ENCODE measurements at regions of chr4 and their contacts with region 1.

Region 1: GRCh38 chr4:76896731-76897535 is 1.0 kb downstream of the SOWAHB start:
- DNase-seq: peak in 1 of 2 experiments; percentile 66
- H3K4me3 ChIP-seq: peak overlapping the region; percentile 92
- H3K4me3 Mint-ChIP-seq: peak overlapping the region; percentile 72
- H3K27ac Mint-ChIP-seq: no peak overlapping the region
- H3K4me1 ChIP-seq: peaks cover 23% of the 10 kb centered on the region
- H3K4me1 Mint-ChIP-seq: peaks cover 14% of the 10 kb centered on the region
- H3K27me3 ChIP-seq: no peaks in the 10 kb centered on the region
- H3K27me3 Mint-ChIP-seq: no peaks in the 10 kb centered on the region
- CTCF ChIP-seq: no peak

Region 2: GRCh38 chr4:76765473-76766183 is 131.3 kb before region 1 on chr4:
- CTCF ChIA-PET with region 1: no interaction called
- POLR2A ChIA-PET with region 1: interaction called, 4 read pairs
- intact Hi-C with region 1: loop called (anchors 5 kb)
- DNase-seq: no peak
- H3K4me3 ChIP-seq: no peak overlapping the region
- H3K4me3 Mint-ChIP-seq: no peak overlapping the region
- H3K27ac Mint-ChIP-seq: no peak overlapping the region
- H3K4me1 ChIP-seq: peaks cover 42% of the 10 kb centered on the region
- H3K4me1 Mint-ChIP-seq: peaks cover 31% of the 10 kb centered on the region
- H3K27me3 ChIP-seq: no peaks in the 10 kb centered on the region
- H3K27me3 Mint-ChIP-seq: no peaks in the 10 kb centered on the region
- CTCF ChIP-seq: no peak

Region 3: DNA sequence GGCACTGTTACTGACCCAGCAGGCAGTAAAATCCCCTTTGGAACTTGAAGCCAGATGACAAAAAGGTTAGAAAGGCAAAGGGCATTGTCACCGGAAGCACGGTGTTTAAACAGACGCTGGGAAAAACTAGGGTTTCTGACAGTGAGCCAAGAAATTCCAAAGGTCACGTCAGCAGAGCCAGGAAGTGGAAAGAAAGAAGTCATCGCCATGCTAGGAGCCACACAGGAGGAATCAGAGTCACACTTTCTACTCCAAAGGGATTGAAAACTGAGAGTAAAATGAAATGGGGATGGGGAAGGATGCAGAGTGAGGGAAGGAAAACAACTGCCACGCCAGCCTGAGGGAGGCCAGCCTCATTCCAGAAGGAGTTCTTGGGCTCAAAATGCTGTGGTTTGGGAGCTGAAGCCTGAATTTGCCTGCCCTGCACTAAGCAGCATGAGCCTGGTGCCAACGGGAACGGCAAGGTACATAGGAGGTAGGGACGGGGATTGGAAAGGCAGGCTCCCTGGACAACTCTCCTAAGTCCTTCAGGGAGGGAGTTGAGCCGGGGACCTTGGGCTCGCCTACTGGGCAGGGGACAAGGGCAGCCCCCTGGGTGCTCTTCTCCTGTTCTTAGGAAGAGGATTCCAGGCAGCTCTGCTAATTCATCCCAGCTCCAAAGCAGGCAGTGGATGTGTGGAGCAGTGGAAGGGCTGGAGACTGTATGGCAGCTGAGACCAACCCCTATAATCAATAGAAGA is 65.8 kb before region 1 on chr4:
- CTCF ChIA-PET with region 1: no interaction called
- POLR2A ChIA-PET with region 1: interaction called, 4 read pairs
- intact Hi-C with region 1: loop called (anchors 10 kb)
- DNase-seq: peak; percentile 64 to 78
- H3K4me3 ChIP-seq: peak overlapping the region; percentile 41
- H3K4me3 Mint-ChIP-seq: peak overlapping the region; percentile 71
- H3K27ac Mint-ChIP-seq: peak overlapping the region; percentile 92
- H3K4me1 ChIP-seq: peaks cover 24% of the 10 kb centered on the region
- H3K4me1 Mint-ChIP-seq: peaks cover 27% of the 10 kb centered on the region
- H3K27me3 ChIP-seq: no peaks in the 10 kb centered on the region
- H3K27me3 Mint-ChIP-seq: no peaks in the 10 kb centered on the region
- CTCF ChIP-seq: no peak

Region 4: DNA sequence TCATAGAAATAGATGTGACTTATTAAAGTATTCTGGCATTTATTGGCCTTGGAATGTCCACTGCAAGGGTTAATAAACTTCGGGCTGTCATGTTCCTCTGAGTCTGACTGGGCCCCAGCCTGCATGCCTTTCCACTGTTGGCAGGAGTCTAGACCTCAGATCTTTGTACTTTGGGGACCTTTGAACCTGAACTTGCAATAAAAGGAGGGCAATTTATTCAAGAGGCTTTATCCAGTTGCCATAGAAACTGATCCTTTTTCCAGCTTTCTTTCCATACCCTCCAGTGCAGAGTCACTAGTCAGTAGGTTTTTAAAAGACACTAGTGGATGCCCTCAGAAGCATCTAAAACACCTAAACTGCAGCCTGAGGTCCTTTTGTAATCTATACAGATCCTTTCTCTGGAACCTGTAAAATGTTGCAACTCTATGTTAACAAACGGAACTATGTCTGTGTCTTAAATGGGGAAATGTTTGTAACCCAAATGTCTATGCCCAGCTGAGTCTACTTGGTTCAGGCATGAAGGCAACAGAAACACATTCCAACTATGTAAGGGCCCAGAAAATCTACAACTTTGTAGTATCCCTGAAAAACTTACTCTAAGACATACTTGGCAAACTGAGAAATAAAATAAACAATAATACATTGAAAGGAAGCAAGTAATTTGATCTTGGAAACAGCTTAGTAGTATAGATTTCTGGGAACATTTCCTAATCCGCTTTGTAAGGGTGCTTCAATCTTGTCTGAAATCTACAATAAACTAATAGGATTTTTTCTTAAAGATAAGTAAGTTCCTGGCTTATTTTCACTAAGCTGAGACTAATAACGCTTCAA is 40.5 kb before region 1 on chr4:
- CTCF ChIA-PET with region 1: no interaction called
- POLR2A ChIA-PET with region 1: interaction called, 5 read pairs
- intact Hi-C with region 1: loop called (anchors 1 kb)
- DNase-seq: peak; percentile 77 to 79
- H3K4me3 ChIP-seq: no peak overlapping the region
- H3K4me3 Mint-ChIP-seq: peak overlapping the region; percentile 24
- H3K27ac Mint-ChIP-seq: peak overlapping the region; percentile 25
- H3K4me1 ChIP-seq: peaks cover 21% of the 10 kb centered on the region
- H3K4me1 Mint-ChIP-seq: peaks cover 30% of the 10 kb centered on the region
- H3K27me3 ChIP-seq: no peaks in the 10 kb centered on the region
- H3K27me3 Mint-ChIP-seq: no peaks in the 10 kb centered on the region
- CTCF ChIP-seq: no peak

Region 5: GRCh38 chr4:76949276-76950051 is 52.5 kb after region 1 on chr4 and contains the start of gene SEPTIN11:
- CTCF ChIA-PET with region 1: interaction called, 7 read pairs
- POLR2A ChIA-PET with region 1: no interaction called
- intact Hi-C with region 1: loop called (anchors 1 kb)
- DNase-seq: peak; percentile 94 to 95
- H3K4me3 ChIP-seq: peak within 1 kb of the TSS; percentile 94
- H3K4me3 Mint-ChIP-seq: peak within 1 kb of the TSS; percentile 100
- H3K27ac Mint-ChIP-seq: peak within 1 kb of the TSS; percentile 97
- H3K4me1 ChIP-seq: peaks cover 5% of the 10 kb centered on the region; the same call in 1 of the 2 replicates
- H3K4me1 Mint-ChIP-seq: peaks cover 12% of the 10 kb centered on the region
- H3K27me3 ChIP-seq: no peaks in the 10 kb centered on the region
- H3K27me3 Mint-ChIP-seq: no peaks in the 10 kb centered on the region
- CTCF ChIP-seq: no peak
- total RNA-seq, gene SEPTIN11: 119 and 127 TPM in 2 replicates

Region 6: DNA sequence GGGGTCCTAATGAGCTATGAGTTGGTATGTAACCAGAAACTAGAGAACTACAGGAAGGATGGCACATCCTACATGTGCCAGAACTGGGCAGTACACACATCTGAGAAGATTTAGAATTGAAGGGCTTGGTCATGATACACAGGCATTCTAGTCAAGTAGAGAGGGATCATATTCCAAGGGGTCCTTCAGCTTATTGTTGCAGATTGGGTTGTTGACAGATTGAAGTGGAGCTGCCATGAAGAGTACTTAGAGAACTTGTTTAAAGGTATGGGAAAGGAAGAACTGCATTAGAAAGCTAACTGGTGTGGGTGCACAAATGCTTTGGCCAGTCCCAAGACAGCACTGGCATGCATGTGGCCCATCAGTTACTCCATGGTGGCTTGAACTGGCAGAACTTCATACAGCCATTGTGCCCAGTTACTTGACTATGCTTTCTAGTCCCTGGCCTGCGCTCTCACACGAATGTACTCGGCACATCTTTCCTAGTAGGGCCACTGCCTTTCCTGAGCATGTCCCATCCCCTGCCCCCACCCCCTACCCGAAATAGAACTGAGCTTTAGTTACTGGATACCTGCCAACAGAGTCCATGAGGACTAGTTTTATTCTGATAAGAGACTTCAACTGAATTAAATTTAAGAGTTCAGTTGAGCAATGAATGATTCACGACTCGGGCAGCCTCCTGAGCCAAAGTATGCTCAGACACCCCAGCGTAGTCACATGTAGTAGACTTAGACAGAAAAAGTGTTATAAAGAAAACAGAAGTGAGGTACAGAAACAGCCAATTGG is 324.1 kb after region 1 on chr4:
- CTCF ChIA-PET with region 1: no interaction called
- POLR2A ChIA-PET with region 1: no interaction called
- intact Hi-C with region 1: no loop called
- DNase-seq: no peak
- H3K4me3 ChIP-seq: no peak overlapping the region
- H3K4me3 Mint-ChIP-seq: no peak overlapping the region
- H3K27ac Mint-ChIP-seq: no peak overlapping the region
- H3K4me1 ChIP-seq: peaks cover 2% of the 10 kb centered on the region; the same call in 1 of the 2 replicates
- H3K4me1 Mint-ChIP-seq: no peaks in the 10 kb centered on the region
- H3K27me3 ChIP-seq: no peaks in the 10 kb centered on the region
- H3K27me3 Mint-ChIP-seq: peaks cover 3% of the 10 kb centered on the region
- CTCF ChIP-seq: no peak

Region 7: DNA sequence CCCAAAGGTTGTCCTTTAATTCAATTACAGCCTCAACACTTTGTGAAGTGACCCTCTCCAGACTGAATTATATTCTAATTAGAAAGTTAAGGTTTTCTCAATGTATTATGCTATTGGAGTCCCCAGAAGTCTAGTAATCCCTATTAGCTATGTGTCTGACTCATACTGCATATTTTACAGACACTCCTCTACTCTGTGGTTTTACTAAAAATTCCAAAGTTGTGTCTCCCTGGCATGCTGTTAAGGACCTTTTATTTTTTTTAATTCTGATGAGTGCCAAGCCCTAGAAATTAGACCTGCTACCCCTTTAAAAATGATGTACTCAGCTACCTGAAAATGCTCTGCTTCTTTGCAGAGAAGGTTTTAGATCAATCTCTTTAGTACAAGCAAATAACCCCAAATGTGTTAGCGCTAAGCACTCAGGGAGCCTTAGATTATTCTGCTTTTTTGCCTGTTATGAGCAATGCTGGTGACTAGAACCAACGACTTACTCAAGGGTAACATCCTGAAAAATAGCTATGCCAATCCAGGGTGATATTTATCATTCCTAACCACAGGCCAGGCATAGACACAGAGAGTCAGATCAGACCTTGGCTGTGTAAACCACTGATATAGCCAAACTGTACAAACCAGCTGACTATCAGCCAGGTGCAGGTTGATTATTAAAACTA is 682.6 kb after region 1 on chr4:
- CTCF ChIA-PET with region 1: no interaction called
- POLR2A ChIA-PET with region 1: no interaction called
- intact Hi-C with region 1: no loop called
- DNase-seq: no peak
- H3K4me3 ChIP-seq: no peak overlapping the region
- H3K4me3 Mint-ChIP-seq: no peak overlapping the region
- H3K27ac Mint-ChIP-seq: no peak overlapping the region
- H3K4me1 ChIP-seq: no peaks in the 10 kb centered on the region
- H3K4me1 Mint-ChIP-seq: no peaks in the 10 kb centered on the region
- H3K27me3 ChIP-seq: no peaks in the 10 kb centered on the region
- H3K27me3 Mint-ChIP-seq: peaks cover 6% of the 10 kb centered on the region
- CTCF ChIP-seq: no peak